Activated T-helper 2 cell treated with anti-CD3 and anti-CD28 coated beads, Interferon-gamma antibody, Interleukin-2, Interleukin-4, amounts not matched to agents 10 μg/mL and 5 μg/mL and 100 μg/mL, durations not matched to agents 14 hours and 24 hours and 36 hours (primary cell): ENCODE measurements at regions of chrX and their contacts with region 1.

Region 1: DNA sequence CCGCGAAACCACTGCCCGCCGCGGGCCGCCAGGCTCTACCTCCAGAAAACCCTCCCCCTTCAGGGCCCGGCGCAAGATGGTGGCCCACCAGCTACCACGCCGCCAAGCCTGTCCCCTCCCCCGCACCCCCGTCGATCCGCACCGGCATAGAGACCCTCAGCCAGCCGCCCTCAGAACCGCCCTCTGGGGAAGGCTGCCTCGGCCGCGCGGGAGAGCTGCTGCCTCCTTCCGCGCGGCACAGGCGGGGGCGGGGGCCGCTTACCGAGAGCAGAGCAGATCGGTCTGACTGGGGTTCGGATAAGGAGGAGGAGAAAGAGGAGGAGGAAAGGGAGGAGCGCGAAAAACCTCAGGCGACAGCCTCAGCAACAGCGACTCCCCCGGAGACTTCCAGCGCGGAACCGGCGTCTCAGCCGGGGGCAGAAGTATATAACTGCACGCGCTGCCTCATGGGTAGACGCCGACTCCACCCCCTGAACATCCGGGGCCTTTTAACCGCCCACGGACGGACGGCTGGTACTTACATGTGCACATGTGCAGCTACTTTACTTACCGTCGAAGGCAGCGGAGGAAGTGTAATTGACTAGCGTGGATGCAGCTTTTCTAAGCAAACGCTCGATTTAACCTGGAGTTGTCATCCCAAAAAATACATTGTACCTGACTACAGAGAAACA is at the start of gene ZNF280C:
- DNase-seq: peak; percentile 88
- H3K4me3 Mint-ChIP-seq: peak within 1 kb of the TSS; percentile 88
- H3K27ac Mint-ChIP-seq: peak within 1 kb of the TSS; percentile 84
- H3K4me1 Mint-ChIP-seq: peaks cover 16% of the 10 kb centered on the region
- H3K27me3 Mint-ChIP-seq: peaks cover 7% of the 10 kb centered on the region
- total RNA-seq, gene ZNF280C: 8.9 and 9.2 TPM in 2 replicates

Region 2: DNA sequence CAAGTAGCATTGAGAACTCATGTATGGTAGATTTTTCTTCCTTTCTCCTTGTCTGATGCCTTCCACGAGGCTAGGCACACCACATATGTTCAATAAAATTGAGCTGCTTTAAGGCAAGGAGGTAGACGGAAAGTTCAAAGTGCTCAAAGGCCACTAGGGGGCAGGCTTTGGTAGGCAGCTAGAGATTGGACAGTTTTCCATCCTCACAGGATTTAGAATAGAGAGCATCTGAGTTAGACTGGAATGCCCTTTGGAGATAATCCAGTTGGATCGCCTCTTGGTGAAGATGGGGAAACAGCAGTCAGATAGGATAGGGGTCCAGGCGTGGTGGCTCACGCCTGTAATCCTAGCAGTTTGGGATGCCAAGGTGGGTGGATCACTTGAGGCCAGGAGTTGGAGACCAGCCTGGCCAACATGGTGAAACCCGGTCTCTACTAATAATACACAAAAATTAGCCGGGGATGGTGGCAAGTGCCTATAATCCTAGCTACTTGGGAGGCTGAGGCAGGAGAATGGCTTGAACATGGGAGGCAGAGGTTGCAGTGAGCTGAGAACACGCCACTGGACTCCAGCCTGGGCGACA is 188.7 kb before region 1 on chrX:
- intact Hi-C with region 1: loop called (anchors 5 kb)
- DNase-seq: peak; percentile 36
- H3K4me3 Mint-ChIP-seq: no peak overlapping the region
- H3K27ac Mint-ChIP-seq: no peak overlapping the region
- H3K4me1 Mint-ChIP-seq: peaks cover 34% of the 10 kb centered on the region
- H3K27me3 Mint-ChIP-seq: no peaks in the 10 kb centered on the region

Region 3: DNA sequence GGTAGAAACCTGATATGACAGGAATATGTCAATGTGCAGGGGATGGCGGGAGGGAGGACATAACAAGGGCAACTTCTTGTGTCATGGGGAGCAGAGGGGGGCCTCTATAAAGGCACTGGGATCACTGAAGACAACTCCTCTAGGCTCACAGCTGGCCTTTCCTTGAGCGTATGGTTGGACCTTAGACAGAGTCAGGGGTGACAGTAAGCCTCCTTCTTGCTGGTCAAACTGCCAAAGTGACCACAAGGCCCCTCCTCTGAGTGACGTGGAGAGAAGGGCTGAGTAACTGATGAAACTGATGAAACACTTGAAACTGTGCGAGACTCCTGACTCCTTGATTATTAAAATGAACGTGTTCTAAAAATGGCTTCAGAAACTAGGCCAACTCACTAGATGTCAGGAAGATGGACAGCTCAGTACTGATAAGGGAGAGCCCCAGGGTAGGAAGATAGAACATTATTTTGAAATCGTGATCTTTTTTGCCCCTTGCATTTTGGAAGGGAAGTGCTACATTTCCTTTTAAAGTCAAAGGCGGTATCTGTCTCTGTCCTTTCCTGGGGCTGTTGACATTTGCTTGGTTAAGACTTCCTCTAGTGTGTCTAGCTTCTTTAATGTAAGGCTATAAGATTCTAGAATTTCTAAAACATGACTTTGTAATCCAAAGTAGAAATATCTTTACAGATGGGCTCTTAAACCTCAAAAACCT is 95.3 kb before region 1 on chrX:
- intact Hi-C with region 1: loop called (anchors 2 kb)
- DNase-seq: peak; percentile 22
- H3K4me3 Mint-ChIP-seq: peak overlapping the region; percentile 92
- H3K27ac Mint-ChIP-seq: peak overlapping the region; percentile 90
- H3K4me1 Mint-ChIP-seq: peaks cover 43% of the 10 kb centered on the region
- H3K27me3 Mint-ChIP-seq: no peaks in the 10 kb centered on the region

Region 4: GRCh38 chrX:130211415-130212186 is 57.0 kb before region 1 on chrX:
- intact Hi-C with region 1: loop called (anchors 1 kb)
- DNase-seq: no peak
- H3K4me3 Mint-ChIP-seq: peak overlapping the region; percentile 62
- H3K27ac Mint-ChIP-seq: peak overlapping the region; percentile 90
- H3K4me1 Mint-ChIP-seq: peaks cover 26% of the 10 kb centered on the region
- H3K27me3 Mint-ChIP-seq: no peaks in the 10 kb centered on the region

Region 5: GRCh38 chrX:130339408-130340222 is 71.0 kb after region 1 on chrX and contains the start of gene SLC25A14:
- intact Hi-C with region 1: loop called (anchors 5 kb)
- DNase-seq: peak; percentile 70
- H3K4me3 Mint-ChIP-seq: peak within 1 kb of the TSS; percentile 94
- H3K27ac Mint-ChIP-seq: peak within 1 kb of the TSS; percentile 96
- H3K4me1 Mint-ChIP-seq: peaks cover 18% of the 10 kb centered on the region
- H3K27me3 Mint-ChIP-seq: no peaks in the 10 kb centered on the region
- total RNA-seq, gene SLC25A14: 10.5 TPM in 2 replicates

Region 6: DNA sequence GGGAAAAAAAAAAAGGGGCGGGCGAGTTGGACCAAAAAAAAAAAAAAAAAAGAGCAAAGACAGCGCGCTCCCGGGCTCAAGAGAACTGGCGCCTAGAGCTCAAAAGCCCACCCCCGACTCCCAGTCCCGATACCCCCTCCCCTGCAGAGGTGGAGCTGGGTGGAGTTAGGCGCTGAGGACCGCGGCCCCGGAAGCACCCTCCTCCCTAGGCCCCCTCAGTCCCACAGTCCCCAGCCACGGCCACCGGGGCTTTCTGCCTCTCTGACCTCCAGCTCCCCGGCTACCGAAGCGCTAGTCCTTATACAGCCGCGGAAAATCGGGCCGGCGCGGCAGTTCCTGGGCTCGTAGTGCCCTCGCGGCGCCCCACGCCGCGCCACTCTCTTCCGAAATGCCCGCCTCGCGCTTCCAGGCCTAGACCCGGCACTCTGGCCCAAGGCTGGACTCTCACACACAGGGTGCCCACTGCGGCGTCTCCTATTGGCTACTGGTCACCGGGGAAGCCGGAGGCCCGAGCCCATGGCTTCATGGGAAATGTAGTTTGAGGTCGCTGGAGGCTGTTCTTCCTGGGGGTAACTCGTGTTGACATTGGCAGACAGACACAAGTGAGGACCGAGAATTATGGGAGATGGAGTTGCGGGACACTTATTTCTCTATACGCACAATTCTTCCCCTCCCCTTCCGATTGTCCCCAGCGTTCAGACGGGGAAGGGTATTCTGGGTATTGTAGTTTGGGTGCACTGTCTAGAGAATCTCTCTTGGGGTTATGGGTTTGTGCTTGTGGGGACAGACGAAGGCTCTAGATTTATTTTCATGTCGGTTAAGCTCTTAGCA is 634.4 kb after region 1 on chrX and contains the start of gene ENOX2:
- intact Hi-C with region 1: loop called (anchors 5 kb)
- DNase-seq: peak; percentile 82
- H3K4me3 Mint-ChIP-seq: no peak within 1 kb of the TSS
- H3K27ac Mint-ChIP-seq: peak within 1 kb of the TSS; percentile 80
- H3K4me1 Mint-ChIP-seq: peaks cover 8% of the 10 kb centered on the region
- H3K27me3 Mint-ChIP-seq: peaks cover 3% of the 10 kb centered on the region
- total RNA-seq, gene ENOX2: 17.7 and 17.8 TPM in 2 replicates